Activated CD4-positive, alpha-beta memory T cell treated with anti-CD3 and anti-CD28 coated beads, Interleukin-2, amount 10 ng/mL, durations not matched to agents 7 days and 5 days (primary cell): ENCODE measurements at regions of chr17 and their contacts with region 1.

Region 1: GRCh38 chr17:63621766-63622519 is at the start of gene MAP3K3:
- DNase-seq: peak; percentile 98
- H3K4me3 Mint-ChIP-seq: peak within 1 kb of the TSS; percentile 99
- H3K27ac Mint-ChIP-seq: peak within 1 kb of the TSS; percentile 89
- H3K4me1 Mint-ChIP-seq: peaks cover 35% of the 10 kb centered on the region
- H3K27me3 Mint-ChIP-seq: peaks cover 8% of the 10 kb centered on the region
- total RNA-seq, gene MAP3K3: 46.5 to 47.8 TPM

Region 2: DNA sequence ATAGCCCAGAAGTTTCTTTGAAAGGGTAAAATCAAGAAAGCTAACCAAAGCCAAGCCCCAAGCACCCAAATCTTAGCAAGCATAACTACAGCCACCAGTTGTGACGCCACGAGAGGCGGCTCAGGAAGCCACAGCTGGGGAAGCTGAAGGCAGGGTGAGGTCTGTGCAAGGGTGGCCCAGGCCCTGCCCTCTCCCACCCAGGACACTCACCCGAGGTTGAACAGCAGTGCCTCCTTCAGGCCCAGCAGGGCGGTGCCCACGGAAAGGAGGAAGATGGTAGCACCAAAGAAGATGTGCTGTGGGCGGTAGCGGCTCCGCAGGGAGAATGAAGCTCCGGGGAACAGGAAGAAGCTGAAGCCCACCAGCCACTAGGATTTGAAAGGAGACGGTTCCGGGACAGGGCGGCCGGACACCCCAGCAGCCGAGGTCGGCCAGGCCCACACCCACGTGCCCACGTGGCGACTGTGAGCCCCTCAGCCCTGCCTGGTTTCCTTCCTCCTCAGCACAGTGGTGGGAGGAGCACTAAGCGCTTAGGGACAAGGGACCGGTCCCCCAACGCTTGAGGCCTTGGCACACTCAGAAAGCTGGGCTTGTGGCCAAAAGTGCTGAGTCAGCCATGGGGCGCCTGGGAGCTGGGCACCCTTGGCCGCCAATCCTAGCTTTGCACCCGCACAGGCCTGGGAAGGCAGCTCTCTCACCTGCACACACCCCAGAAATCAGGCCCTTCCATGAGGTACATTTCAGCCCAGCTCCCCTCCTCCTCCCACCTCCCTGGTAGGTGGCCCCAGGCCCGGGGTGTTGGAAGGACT is 186.9 kb before region 1 on chr17:
- CTCF ChIA-PET with region 1: interaction called, 180 read pairs
- POLR2A ChIA-PET with region 1: interaction called, 12 read pairs
- DNase-seq: peak; percentile 82
- H3K4me3 Mint-ChIP-seq: peak overlapping the region; percentile 44
- H3K27ac Mint-ChIP-seq: peak overlapping the region; percentile 84
- H3K4me1 Mint-ChIP-seq: peaks cover 68% of the 10 kb centered on the region
- H3K27me3 Mint-ChIP-seq: no peaks in the 10 kb centered on the region

Region 3: DNA sequence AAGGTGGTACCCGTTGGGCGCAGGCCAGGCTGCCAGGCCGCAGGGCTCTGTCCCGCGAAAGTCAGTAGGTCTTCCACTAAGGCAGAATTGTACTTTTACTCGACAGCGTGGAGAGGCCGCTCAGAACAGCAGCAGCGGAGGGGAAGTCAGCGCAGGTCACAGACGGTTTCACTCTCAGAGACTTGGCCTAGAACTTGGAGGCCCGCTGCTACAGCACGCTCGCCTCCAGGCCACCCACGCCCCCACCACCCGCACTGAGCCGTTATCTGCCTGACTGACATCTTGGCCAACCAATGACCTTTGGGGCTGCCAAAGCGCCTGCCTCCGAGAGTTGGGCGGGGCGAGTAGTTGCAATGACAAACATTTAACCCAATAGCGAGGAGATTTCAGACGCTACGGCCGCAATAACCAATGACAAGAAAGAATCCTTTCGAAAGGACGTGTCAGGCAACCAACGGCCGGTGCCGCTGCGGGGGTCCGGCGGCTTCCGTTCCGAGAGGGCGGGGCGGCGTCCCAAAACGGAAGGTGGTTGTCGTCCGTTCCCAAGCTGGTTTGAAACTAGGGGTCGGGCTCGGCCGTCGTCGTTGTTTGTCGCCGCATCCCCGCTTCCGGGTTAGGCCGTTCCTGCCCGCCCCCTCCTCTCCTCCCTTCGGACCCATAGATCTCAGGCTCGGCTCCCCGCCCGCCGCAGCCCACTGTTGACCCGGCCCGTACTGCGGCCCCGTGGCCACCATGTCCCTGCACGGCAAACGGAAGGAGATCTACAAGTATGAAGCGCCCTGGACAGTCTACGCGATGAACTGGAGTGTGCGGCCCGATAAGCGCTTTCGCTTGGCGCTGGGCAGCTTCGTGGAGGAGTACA is 71.8 kb before region 1 on chr17 and contains the start of gene DCAF7:
- CTCF ChIA-PET with region 1: no interaction called
- POLR2A ChIA-PET with region 1: interaction called, 21 read pairs
- DNase-seq: peak; percentile 100
- H3K4me3 Mint-ChIP-seq: peak within 1 kb of the TSS; percentile 86
- H3K27ac Mint-ChIP-seq: peak within 1 kb of the TSS; percentile 96
- H3K4me1 Mint-ChIP-seq: peaks cover 32% of the 10 kb centered on the region
- H3K27me3 Mint-ChIP-seq: no peaks in the 10 kb centered on the region
- total RNA-seq, gene DCAF7: 138 to 139 TPM

Region 4: DNA sequence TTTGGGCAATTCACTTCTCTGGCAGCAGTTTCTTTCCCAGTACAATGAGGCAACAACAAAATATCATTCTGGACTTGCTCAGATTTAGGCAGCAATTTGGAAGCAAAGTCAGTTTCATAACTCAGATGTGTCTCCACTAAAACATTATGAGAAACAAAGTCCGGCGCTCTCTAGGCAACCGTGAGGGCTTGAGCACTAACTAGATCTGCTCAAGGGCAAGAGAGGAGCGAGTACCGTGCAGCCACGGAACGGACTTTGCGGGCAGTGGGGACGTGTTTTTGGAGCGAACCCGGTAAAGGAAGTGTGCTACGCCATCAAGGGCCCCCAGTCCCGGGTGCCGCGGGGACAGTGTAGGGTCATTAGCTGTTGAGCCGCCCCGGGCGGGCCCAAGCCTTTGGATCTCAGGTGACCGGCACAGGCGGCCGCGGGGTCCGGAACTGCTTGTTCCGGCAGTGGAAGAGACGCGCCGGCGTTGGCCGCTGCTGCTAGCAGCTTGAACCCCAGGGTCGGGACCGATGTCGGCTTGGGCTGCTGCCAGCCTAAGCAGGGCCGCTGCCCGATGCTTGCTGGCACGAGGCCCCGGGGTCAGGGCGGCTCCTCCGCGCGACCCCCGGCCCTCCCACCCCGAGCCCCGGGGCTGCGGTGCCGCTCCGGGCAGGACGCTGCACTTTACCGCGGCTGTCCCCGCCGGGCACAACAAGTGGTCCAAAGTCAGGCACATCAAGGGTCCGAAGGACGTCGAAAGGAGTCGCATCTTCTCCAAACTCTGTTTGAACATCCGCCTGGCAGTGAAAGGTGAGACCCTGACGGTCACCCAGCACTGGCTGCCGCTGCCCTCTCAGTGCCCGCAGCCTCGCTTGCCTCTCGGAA is 21.1 kb before region 1 on chr17 and contains the start of gene TACO1:
- CTCF ChIA-PET with region 1: interaction called, 3 read pairs
- POLR2A ChIA-PET with region 1: interaction called, 19 read pairs
- DNase-seq: peak; percentile 81
- H3K4me3 Mint-ChIP-seq: peak within 1 kb of the TSS; percentile 97
- H3K27ac Mint-ChIP-seq: peak within 1 kb of the TSS; percentile 92
- H3K4me1 Mint-ChIP-seq: peaks cover 51% of the 10 kb centered on the region
- H3K27me3 Mint-ChIP-seq: no peaks in the 10 kb centered on the region
- total RNA-seq, gene TACO1: 26.7 to 27.9 TPM

Region 5: GRCh38 chr17:63634163-63634562 is 12.2 kb after region 1 on chr17:
- CTCF ChIA-PET with region 1: interaction called, 5 read pairs
- POLR2A ChIA-PET with region 1: interaction called, 12 read pairs
- DNase-seq: no peak
- H3K4me3 Mint-ChIP-seq: no peak overlapping the region
- H3K27ac Mint-ChIP-seq: peak overlapping the region; percentile 1
- H3K4me1 Mint-ChIP-seq: peaks cover 16% of the 10 kb centered on the region
- H3K27me3 Mint-ChIP-seq: no peaks in the 10 kb centered on the region